ENCODE measurements at regions of chr4 and their contacts with region 1.

Region 1: DNA sequence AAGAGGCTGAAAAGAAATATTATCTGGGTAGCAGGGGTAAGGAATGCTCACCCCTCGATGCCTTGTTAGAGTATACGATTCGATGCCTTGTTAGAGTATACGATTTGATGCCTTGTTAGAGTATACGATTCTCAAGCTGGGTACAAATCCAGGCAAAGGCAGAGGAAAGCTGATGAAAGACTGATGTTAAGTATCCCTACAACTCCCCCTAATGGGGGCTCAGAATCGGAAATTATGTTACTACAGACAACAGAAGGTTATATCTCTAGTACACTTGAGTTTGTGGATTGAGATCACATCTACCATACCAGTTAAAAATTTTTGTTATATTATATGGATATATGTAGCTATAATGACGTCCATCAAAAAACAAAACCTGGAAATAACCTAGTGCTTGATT is 4.8 kb downstream of the LRRC66 start:
- DNase-seq: peak; percentile 58
- ATAC-seq: peak; percentile 88
- H3K4me3 ChIP-seq: no peak overlapping the region
- H3K27ac ChIP-seq: no peak overlapping the region
- H3K4me1 ChIP-seq: peaks cover 14% of the 10 kb centered on the region
- H3K27me3 ChIP-seq: no peaks in the 10 kb centered on the region
- CTCF ChIP-seq: peak; percentile 68
- EP300 ChIP-seq: no peak
- POLR2A ChIP-seq: no peak
- RAD21 ChIP-seq: peak; percentile 33; the same call in 1 of the 2 replicates

Region 2: DNA sequence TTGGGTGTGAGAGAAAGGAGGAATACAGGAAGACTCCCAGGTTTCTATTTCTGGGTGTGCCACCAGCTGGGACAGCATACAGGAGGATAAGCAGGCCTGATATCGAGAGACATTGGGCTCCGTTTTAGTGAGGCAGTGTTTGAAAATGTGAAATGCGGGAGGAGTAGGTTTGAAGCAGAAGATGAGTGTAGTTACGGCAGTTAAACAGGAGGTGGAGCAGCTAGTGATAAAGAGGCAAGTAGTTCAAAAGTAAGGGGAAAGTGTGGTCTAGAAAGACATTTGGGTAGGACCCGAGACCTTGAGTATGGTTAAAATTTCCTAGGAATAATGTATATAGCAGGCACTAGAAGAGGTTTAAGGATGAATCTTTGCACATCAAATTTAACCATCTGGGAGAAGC is 130.0 kb before region 1 on chr4:
- CTCF ChIA-PET with region 1: interaction called, 3 read pairs
- POLR2A ChIA-PET with region 1: no interaction called
- in situ Hi-C with region 1: no loop called
- intact Hi-C with region 1: loop called (anchors 1 kb)
- DNase-seq: peak; percentile 44
- ATAC-seq: peak; percentile 58; the same call in 2 of the 3 replicates
- H3K4me3 ChIP-seq: no peak overlapping the region
- H3K27ac ChIP-seq: no peak overlapping the region
- H3K4me1 ChIP-seq: peaks cover 11% of the 10 kb centered on the region
- H3K27me3 ChIP-seq: no peaks in the 10 kb centered on the region
- CTCF ChIP-seq: peak; percentile 62
- EP300 ChIP-seq: no peak
- POLR2A ChIP-seq: no peak
- RAD21 ChIP-seq: no peak

Region 3: DNA sequence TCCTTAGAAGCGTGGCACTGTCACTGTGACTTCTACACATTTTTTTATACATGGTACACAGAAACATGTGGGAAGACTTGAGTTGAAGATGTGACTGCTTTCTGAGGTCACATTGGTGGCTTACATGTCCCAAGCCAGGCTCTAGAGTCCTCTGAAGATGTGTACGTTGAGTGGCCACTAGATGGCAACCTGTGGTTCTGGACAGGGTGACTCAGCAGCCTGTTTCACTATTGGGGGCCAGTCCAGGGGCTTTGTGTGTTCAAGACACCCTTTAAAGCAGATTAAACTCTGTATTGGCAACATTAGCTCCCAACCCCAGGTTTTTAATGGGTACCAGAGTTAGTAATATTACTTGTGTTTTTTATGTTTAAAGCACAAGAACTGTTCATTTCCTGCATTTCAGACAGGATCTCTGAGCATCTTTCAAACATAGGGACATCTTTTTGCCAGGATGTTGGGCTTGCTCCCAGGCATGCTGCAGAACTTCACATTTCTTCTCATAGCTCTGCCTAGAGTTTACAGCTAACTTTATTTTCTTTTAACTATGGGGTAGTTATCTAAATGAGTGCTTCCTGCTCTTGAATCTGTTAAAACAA is 119.5 kb before region 1 on chr4:
- CTCF ChIA-PET with region 1: interaction called, 11 read pairs
- POLR2A ChIA-PET with region 1: no interaction called
- in situ Hi-C with region 1: loop called (anchors 5 kb)
- intact Hi-C with region 1: loop called (anchors 1 kb)
- DNase-seq: peak; percentile 77
- ATAC-seq: peak; percentile 100
- H3K4me3 ChIP-seq: no peak overlapping the region
- H3K27ac ChIP-seq: peak overlapping the region; percentile 55
- H3K4me1 ChIP-seq: peaks cover 13% of the 10 kb centered on the region
- H3K27me3 ChIP-seq: no peaks in the 10 kb centered on the region
- CTCF ChIP-seq: peak; percentile 87
- EP300 ChIP-seq: no peak
- POLR2A ChIP-seq: no peak
- RAD21 ChIP-seq: peak; percentile 70

Region 4: DNA sequence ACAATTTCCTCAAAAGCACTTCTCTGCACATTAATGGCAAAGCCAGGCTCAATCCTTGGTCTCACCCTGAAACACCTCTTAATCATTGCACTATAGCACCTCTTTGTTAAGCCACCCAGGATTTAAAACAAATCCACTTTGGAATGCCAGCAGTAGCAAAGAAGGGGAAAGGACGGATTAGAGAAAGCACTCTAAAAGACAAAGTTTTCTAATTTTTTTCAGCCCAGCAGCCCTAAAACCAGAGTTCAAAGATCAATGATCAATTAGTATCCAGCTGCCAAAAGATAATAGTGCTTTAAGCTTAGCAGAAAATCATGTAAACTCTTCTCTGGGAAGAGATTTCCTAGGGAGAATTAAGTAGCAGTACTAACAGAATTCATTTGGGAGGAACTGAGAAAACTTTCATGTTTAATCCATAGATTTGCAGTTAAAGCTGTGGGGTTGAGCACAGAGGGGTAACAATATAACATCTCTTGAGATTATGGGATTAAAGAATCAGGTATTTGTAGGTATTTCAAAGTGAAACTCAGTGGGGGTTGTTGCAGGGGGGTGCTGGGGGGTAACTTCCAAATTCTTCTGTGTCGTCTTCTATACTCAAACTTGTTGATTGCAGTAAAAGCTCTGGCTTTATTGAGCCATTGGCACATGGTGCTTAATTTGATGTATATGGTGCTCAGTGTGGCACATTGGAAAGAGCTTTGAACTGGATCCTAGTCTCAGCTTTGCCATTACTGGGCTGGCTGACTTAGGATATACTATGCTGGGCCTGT is 57.0 kb before region 1 on chr4:
- CTCF ChIA-PET with region 1: no interaction called
- POLR2A ChIA-PET with region 1: no interaction called
- in situ Hi-C with region 1: no loop called
- intact Hi-C with region 1: no loop called
- DNase-seq: no peak
- ATAC-seq: no peak
- H3K4me3 ChIP-seq: no peak overlapping the region
- H3K27ac ChIP-seq: no peak overlapping the region
- H3K4me1 ChIP-seq: no peaks in the 10 kb centered on the region
- H3K27me3 ChIP-seq: no peaks in the 10 kb centered on the region; a peak in 1 of 5 replicates
- CTCF ChIP-seq: no peak
- EP300 ChIP-seq: no peak
- POLR2A ChIP-seq: no peak
- RAD21 ChIP-seq: no peak

Region 5: DNA sequence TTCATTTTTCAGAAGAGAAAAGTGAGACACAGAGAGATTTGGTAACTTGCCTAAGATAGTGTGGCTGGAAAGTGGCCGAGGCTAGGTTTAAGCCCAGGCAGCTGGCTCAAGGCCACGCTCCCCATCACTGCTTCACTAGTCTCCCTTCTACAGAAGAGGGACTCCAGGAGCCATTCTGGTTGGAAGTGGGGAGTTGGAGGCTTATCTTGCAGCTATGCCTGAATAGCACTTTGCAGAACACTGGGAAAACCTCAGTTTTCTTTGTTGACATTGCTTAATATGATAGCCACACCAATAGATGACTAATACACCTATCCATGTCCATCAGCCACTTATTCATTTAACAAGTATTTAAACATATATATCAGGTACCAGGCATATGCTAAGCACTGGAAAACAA is 13.8 kb before region 1 on chr4:
- CTCF ChIA-PET with region 1: no interaction called
- POLR2A ChIA-PET with region 1: no interaction called
- in situ Hi-C with region 1: no loop called
- intact Hi-C with region 1: no loop called
- DNase-seq: no peak
- ATAC-seq: no peak
- H3K4me3 ChIP-seq: no peak overlapping the region
- H3K27ac ChIP-seq: no peak overlapping the region
- H3K4me1 ChIP-seq: peaks cover 14% of the 10 kb centered on the region; the same call in 1 of the 2 replicates
- H3K27me3 ChIP-seq: no peaks in the 10 kb centered on the region
- CTCF ChIP-seq: no peak
- EP300 ChIP-seq: no peak
- POLR2A ChIP-seq: no peak
- RAD21 ChIP-seq: no peak

Measured in HepG2 (cell line).